Activated T-helper 1 cell treated with anti-CD3 and anti-CD28 coated beads, Interleukin-12 subunit alpha, Interleukin-12 subunit beta, Interleukin-2, Interleukin-4 antibody, amounts not matched to agents 30 ng/mL and 10 ng/mL and 1 ng/mL, durations not matched to agents 14 hours and 24 hours and 36 hours (primary cell): ENCODE measurements at regions of chr2 and their contacts with region 1.

Region 1: GRCh38 chr2:148509288-148509902 is 135.2 kb upstream of the EPC2 start:
- DNase-seq: peak; percentile 77
- H3K4me3 Mint-ChIP-seq: peak overlapping the region; percentile 61
- H3K27ac Mint-ChIP-seq: peak overlapping the region; percentile 79
- H3K4me1 Mint-ChIP-seq: peaks cover 40% of the 10 kb centered on the region
- H3K27me3 Mint-ChIP-seq: peaks cover 2% of the 10 kb centered on the region

Region 2: GRCh38 chr2:147989809-147990403 is 519.5 kb before region 1 on chr2:
- intact Hi-C with region 1: loop called (anchors 1 kb)
- DNase-seq: no peak
- H3K4me3 Mint-ChIP-seq: no peak overlapping the region
- H3K27ac Mint-ChIP-seq: no peak overlapping the region
- H3K4me1 Mint-ChIP-seq: peaks cover 6% of the 10 kb centered on the region
- H3K27me3 Mint-ChIP-seq: no peaks in the 10 kb centered on the region

Region 3: GRCh38 chr2:148201075-148202004 is 308.1 kb before region 1 on chr2:
- intact Hi-C with region 1: loop called (anchors 1 kb)
- DNase-seq: peak; percentile 13
- H3K4me3 Mint-ChIP-seq: no peak overlapping the region
- H3K27ac Mint-ChIP-seq: no peak overlapping the region
- H3K4me1 Mint-ChIP-seq: no peaks in the 10 kb centered on the region
- H3K27me3 Mint-ChIP-seq: no peaks in the 10 kb centered on the region

Region 4: GRCh38 chr2:148552675-148553331 is 43.4 kb after region 1 on chr2:
- intact Hi-C with region 1: loop called (anchors 2 kb)
- DNase-seq: peak; percentile 32
- H3K4me3 Mint-ChIP-seq: no peak overlapping the region
- H3K27ac Mint-ChIP-seq: no peak overlapping the region
- H3K4me1 Mint-ChIP-seq: peaks cover 6% of the 10 kb centered on the region
- H3K27me3 Mint-ChIP-seq: no peaks in the 10 kb centered on the region

Region 5: GRCh38 chr2:148614322-148615049 is 105.1 kb after region 1 on chr2:
- intact Hi-C with region 1: no loop called
- DNase-seq: no peak
- H3K4me3 Mint-ChIP-seq: peak overlapping the region; percentile 41
- H3K27ac Mint-ChIP-seq: peak overlapping the region; percentile 47
- H3K4me1 Mint-ChIP-seq: peaks cover 16% of the 10 kb centered on the region
- H3K27me3 Mint-ChIP-seq: peaks cover 4% of the 10 kb centered on the region